ENCODE measurements at regions of chr1 and their contacts with region 1.

Region 1: GRCh38 chr1:158124999-158125398 is 55.7 kb upstream of the CD1D start:
- DNase-seq: peak; percentile 79
- ATAC-seq: peak; percentile 93
- H3K4me3 ChIP-seq: no peak overlapping the region
- H3K27ac ChIP-seq: no peak overlapping the region
- H3K4me1 ChIP-seq: no peaks in the 10 kb centered on the region
- H3K27me3 ChIP-seq: peaks cover 16% of the 10 kb centered on the region
- CTCF ChIP-seq: peak; percentile 88

Region 2: DNA sequence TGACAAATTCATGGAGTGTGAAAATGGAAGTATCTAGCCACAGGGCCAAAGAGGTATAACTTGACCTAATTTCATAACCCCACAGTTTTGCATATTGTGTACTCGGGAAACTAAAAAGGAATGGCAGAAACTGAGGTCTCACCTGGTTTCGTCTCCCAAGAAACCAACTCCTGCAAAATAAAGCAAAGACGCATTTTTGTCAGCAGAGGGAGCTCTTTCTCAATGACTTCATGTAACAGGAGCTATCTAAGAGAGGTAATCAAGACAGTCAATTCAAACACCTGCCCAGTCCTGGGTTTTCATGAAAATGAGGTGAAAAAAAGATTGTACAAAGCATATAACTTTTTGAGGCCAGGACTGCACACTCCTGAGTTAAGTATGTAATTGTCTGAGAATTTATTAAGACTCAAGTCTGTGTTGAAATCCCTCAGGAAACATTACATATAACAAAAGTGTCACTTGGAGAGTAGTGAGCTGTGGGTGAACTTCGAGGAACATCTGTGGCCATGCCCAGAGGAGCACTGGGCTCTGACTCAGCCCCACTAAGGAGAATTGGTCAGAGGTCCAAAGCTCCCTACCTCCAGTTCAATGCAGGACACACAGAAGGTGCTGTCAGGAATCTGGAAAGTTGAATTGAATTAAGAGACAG is 544.7 kb before region 1 on chr1:
- CTCF ChIA-PET with region 1: interaction called, 7 read pairs
- POLR2A ChIA-PET with region 1: no interaction called
- in situ Hi-C with region 1: no loop called
- intact Hi-C with region 1: loop called (anchors 10 kb)
- DNase-seq: peak; percentile 55
- ATAC-seq: peak; percentile 80
- H3K4me3 ChIP-seq: no peak overlapping the region
- H3K27ac ChIP-seq: no peak overlapping the region
- H3K4me1 ChIP-seq: no peaks in the 10 kb centered on the region
- H3K27me3 ChIP-seq: 0 out of 2 replicates have a peak, but pooled peaks cover 3% of the 10 kb centered on the region
- CTCF ChIP-seq: peak; percentile 79

Region 3: GRCh38 chr1:157878059-157878458 is 246.9 kb before region 1 on chr1:
- CTCF ChIA-PET with region 1: interaction called, 3 read pairs
- POLR2A ChIA-PET with region 1: no interaction called
- in situ Hi-C with region 1: no loop called
- intact Hi-C with region 1: loop called (anchors 5 kb)
- DNase-seq: peak; percentile 18
- ATAC-seq: peak; percentile 88
- H3K4me3 ChIP-seq: no peak overlapping the region
- H3K27ac ChIP-seq: no peak overlapping the region
- H3K4me1 ChIP-seq: no peaks in the 10 kb centered on the region
- H3K27me3 ChIP-seq: peaks cover 2% of the 10 kb centered on the region
- CTCF ChIP-seq: peak; percentile 63

Region 4: GRCh38 chr1:157963713-157964112 is 161.3 kb before region 1 on chr1:
- CTCF ChIA-PET with region 1: interaction called, 23 read pairs
- POLR2A ChIA-PET with region 1: no interaction called
- in situ Hi-C with region 1: no loop called
- intact Hi-C with region 1: loop called (anchors 1 kb)
- DNase-seq: peak; percentile 27
- ATAC-seq: peak; percentile 93
- H3K4me3 ChIP-seq: no peak overlapping the region
- H3K27ac ChIP-seq: no peak overlapping the region
- H3K4me1 ChIP-seq: no peaks in the 10 kb centered on the region
- H3K27me3 ChIP-seq: peaks cover 23% of the 10 kb centered on the region
- CTCF ChIP-seq: peak; percentile 92

Region 5: GRCh38 chr1:157969697-157970485 is 155.1 kb before region 1 on chr1:
- CTCF ChIA-PET with region 1: interaction called, 8 read pairs
- POLR2A ChIA-PET with region 1: no interaction called
- in situ Hi-C with region 1: no loop called
- intact Hi-C with region 1: loop called (anchors 2 kb)
- DNase-seq: no peak
- ATAC-seq: peak; percentile 88
- H3K4me3 ChIP-seq: no peak overlapping the region
- H3K27ac ChIP-seq: no peak overlapping the region
- H3K4me1 ChIP-seq: no peaks in the 10 kb centered on the region; the same call in 1 of the 2 replicates
- H3K27me3 ChIP-seq: no peaks in the 10 kb centered on the region; the same call in 1 of the 2 replicates
- CTCF ChIP-seq: peak; percentile 90

Region 6: DNA sequence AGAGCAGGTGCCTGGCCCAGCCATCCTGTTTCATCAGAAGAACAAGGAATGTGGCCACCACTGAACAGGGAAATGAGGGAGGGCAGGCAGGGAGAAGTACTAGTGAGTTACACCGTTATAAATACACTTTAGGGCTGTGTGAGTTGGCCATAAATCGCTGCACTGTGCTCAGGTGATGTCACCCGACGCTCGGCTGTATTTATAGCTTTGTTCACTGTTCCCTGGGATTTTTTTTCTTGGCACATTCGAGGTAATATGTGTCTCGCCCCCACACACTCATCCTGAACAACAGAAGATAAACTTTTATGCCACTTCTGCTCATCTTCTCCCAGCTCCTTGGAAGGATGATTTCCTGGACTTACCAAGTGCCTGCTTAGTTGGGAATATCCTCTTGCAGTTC is 140.5 kb before region 1 on chr1:
- CTCF ChIA-PET with region 1: interaction called, 40 read pairs
- POLR2A ChIA-PET with region 1: no interaction called
- in situ Hi-C with region 1: no loop called
- intact Hi-C with region 1: no loop called
- DNase-seq: no peak
- ATAC-seq: no peak
- H3K4me3 ChIP-seq: no peak overlapping the region
- H3K27ac ChIP-seq: no peak overlapping the region
- H3K4me1 ChIP-seq: no peaks in the 10 kb centered on the region
- H3K27me3 ChIP-seq: peaks cover 5% of the 10 kb centered on the region; the same call in 1 of the 2 replicates
- CTCF ChIP-seq: no peak

Region 7: GRCh38 chr1:157992031-157992832 is 132.8 kb before region 1 on chr1:
- CTCF ChIA-PET with region 1: interaction called, 40 read pairs
- POLR2A ChIA-PET with region 1: no interaction called
- in situ Hi-C with region 1: no loop called
- intact Hi-C with region 1: no loop called
- DNase-seq: no peak
- ATAC-seq: peak; percentile 63
- H3K4me3 ChIP-seq: peak overlapping the region; percentile 89 to 95
- H3K27ac ChIP-seq: peak overlapping the region; percentile 93
- H3K4me1 ChIP-seq: peaks cover 33% of the 10 kb centered on the region
- H3K27me3 ChIP-seq: no peaks in the 10 kb centered on the region
- CTCF ChIP-seq: peak; percentile 99

Measured in Panc1 (cell line).